Colonic mucosa (tissue), 4 donors: ENCODE measurements at regions of chr2 and their contacts with region 1.

Region 1: DNA sequence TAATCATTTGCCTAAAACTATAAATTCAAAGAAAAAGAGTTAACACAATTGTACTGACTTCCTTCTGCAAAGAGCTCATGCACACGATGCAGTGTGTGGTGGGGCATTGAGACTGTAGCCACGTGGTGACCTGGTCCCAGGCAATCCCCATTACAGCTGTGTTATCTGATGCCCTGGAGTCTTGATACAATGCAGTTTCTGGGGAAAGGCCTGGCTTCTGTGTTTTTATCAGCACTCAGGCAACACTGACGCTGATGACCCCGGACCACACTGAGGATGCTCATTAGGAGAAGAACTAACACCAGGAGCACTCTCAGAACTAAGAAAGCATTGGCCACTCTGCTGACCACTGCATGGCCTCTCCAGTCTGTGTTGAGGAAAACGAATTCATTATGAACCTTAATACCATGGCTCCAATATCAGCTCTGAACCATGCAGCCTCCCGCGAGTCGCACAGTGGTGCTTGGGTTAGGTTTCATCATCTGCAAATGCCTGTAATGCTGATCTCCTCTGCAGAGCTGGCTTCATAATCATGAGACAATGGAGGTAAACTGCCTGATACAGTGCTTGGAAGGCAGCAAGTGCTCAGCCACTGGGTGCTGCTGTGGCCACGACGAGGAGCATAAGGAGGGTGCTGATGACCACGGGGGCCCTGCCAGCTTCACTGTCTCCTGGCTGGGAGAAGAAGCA is 218.5 kb downstream of the MYT1L start:
- DNase-seq: no peak
- H3K4me3 ChIP-seq: no peak overlapping the region
- H3K27ac ChIP-seq: no peak overlapping the region
- H3K4me1 ChIP-seq: no peaks in the 10 kb centered on the region
- H3K27me3 ChIP-seq: no peaks in the 10 kb centered on the region
- CTCF ChIP-seq: no peak

Region 2: DNA sequence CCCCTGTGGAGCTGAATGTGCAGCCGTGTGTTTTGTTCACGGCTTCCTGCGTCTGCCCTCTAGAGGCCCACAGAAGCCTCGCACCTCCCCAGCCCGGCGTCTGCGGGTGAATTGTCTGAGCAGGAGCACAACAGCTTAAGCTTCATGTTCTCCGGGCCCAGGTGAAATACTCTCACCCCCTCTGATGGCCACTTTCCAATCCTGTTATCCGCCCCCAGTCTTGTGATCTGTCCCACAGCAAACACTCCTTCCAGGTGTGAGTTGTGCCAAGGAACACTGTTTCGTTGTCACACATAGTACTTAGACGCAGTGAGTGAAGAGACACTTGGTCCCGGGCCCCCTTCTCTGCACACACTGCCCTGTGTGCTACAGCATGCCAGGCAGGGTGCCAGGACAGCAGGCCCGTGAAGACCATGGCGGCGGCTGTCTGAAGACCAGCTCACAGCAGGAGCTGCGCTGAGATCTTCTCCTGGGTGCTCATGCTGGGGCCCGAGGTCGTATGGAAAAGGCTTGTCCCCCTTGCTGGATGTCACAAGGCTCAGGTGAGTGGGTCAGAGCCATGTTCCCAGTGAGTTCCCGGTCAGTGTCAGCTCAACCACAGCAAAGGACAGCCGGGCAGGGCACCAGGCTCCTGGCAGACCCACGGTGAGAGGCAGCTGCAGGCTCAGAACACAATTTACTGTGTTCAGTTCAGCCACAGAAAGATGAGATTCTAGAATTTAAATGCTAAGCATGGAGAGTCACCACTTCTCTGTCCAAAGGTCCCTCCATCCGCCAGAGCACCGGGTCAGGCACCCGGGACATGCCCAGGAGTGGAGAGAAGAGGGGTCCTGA is 361.4 kb before region 1 on chr2:
- intact Hi-C with region 1: no loop called
- DNase-seq: peak; percentile 57
- H3K4me3 ChIP-seq: no peak overlapping the region
- H3K27ac ChIP-seq: no peak overlapping the region
- H3K4me1 ChIP-seq: no peaks in the 10 kb centered on the region
- H3K27me3 ChIP-seq: no peaks in the 10 kb centered on the region
- CTCF ChIP-seq: peak; percentile 81

Region 3: DNA sequence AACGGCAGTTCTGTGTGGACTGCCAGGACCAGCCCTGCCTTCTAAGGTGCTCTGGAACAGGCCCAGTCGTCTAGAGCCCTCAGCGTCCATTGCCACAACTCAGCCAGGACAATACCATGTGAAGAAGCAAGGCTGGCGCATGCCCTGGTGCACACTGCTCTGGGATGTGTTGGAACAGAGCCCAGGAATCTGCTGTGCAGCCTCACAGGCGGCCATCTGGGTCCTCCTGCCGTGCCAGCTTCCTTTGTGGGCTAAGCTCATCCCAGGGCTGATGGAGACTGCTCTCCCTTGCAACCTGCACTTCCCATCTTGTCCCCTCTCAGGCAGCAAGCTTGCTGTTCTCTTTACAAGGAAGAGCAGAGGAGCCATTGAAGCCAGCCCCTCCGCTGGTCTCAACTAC is 121.8 kb before region 1 on chr2:
- intact Hi-C with region 1: no loop called
- DNase-seq: no peak
- H3K4me3 ChIP-seq: no peak overlapping the region
- H3K27ac ChIP-seq: no peak overlapping the region
- H3K4me1 ChIP-seq: no peaks in the 10 kb centered on the region
- H3K27me3 ChIP-seq: no peaks in the 10 kb centered on the region
- CTCF ChIP-seq: no peak

Region 4: DNA sequence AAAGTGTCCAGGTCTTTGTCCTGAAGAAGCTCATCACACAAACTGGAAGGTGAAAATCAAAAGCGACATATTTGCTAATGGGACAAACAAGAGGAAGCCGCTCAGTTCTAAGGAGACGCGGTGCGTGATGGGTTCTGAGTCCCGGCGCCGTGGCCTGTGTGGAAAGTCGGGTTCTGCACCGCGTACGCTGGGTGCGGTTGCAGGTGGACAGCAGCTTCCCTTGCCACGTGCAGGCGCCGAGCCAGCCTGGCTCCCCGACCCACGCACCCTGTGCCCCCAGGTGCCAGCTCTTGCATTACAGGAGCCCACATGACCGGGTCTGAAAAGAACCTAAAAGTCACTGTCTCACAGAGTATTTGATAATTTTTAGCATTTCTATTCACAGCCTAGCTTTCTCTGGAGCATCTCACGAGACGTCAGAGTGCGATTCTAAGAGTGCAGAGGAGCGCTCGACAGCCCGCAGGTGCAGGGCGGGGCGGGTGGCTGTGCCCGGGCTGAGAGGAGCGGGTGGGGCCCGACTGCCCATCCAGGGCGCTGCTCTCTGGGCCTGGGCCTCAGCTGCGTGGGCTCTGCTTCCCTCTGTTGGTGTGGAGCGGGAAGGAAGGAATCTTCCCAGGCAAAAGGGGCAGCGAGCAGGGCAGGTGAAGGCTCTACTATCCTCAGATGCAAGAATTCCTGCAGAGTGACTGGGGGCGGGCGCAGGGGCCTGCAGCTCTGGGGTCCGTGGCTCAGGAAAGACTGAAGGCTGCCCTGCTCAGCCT is 179.1 kb after region 1 on chr2:
- intact Hi-C with region 1: loop called (anchors 10 kb)
- DNase-seq: no peak
- H3K4me3 ChIP-seq: no peak overlapping the region
- H3K27ac ChIP-seq: no peak overlapping the region
- H3K4me1 ChIP-seq: no peaks in the 10 kb centered on the region
- H3K27me3 ChIP-seq: no peaks in the 10 kb centered on the region
- CTCF ChIP-seq: no peak